Breast epithelium (tissue), 4 donors: ENCODE measurements at regions of chr10 and their contacts with region 1.

Region 1: GRCh38 chr10:7913126-7913872 is 95.0 kb downstream of the TAF3 start:
- DNase-seq: no peak
- H3K4me3 ChIP-seq: no peak overlapping the region
- H3K27ac ChIP-seq: no peak overlapping the region
- H3K4me1 ChIP-seq: no peaks in the 10 kb centered on the region
- H3K27me3 ChIP-seq: no peaks in the 10 kb centered on the region
- CTCF ChIP-seq: no peak
- POLR2A ChIP-seq: no peak

Region 2: DNA sequence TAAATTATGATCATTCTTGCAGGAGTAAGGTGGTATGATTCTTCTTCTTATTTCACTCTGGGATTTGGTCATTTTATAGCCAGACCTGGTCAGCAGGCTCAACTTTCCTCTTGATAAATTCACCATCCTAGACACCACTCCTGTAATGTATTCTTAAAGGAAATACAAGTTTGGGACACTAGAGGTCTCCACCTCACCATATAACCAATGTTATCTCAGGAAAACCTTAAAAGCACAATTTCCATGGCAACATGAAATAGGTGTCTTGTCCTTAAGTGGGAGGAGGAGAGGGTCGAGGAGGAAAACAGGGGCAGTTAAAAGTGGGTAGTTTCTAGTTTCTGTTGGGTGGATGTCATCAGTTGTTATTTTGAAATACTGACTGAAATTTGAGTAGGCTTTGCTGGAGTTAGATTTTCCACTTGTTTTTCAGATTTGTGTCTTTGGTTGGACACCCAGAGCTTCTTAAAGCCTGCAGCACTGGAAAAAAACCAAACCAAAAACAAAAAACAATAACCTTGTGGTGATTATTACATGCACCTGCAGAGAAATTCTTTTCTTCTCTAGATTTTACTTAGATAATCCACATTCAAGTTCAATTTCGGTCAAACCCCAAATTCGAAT is 1496.3 kb before region 1 on chr10:
- intact Hi-C with region 1: no loop called
- DNase-seq: no peak
- H3K4me3 ChIP-seq: no peak overlapping the region
- H3K27ac ChIP-seq: no peak overlapping the region
- H3K4me1 ChIP-seq: no peaks in the 10 kb centered on the region
- H3K27me3 ChIP-seq: no peaks in the 10 kb centered on the region
- CTCF ChIP-seq: peak in 2 of 3 donors; percentile 44 to 65
- POLR2A ChIP-seq: no peak

Region 3: GRCh38 chr10:7857262-7857661 is 56.0 kb before region 1 on chr10:
- intact Hi-C with region 1: loop called (anchors 2 kb)
- DNase-seq: no peak
- H3K4me3 ChIP-seq: no peak overlapping the region
- H3K27ac ChIP-seq: no peak overlapping the region
- H3K4me1 ChIP-seq: no peaks in the 10 kb centered on the region
- H3K27me3 ChIP-seq: no peaks in the 10 kb centered on the region
- CTCF ChIP-seq: no peak
- POLR2A ChIP-seq: no peak

Region 4: DNA sequence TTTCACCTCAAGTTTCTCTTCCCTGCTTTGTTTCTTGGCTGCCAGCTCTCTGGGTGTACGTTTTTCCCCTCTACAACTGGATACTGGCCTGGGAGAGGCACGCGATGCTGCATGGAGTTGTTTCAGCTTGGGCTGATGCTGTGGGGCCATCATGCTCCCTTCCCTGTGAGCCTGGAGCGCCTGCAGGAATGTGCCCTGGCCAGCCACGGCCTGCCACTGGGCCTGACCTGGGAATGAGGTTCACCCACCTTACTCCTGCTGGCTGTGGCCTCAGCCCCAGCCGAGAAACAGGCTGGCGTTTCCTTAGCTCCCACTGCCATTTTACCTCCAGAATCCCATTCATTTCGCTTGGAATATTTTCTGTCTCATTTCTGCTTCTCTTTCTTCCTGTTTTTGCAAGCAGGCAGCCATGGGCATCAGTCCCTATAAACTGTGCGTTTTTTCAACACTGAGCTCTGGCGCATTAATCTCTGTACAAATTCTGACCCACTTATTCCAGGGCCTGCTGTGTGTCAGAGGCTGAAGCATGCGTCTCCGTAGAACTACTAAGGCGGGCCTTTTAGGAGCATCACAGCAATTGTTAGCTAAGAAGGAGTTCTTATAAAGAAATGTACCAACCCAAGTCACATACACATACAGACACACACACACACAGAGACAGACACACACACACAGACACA is 199.1 kb after region 1 on chr10:
- intact Hi-C with region 1: no loop called
- DNase-seq: no peak
- H3K4me3 ChIP-seq: no peak overlapping the region
- H3K27ac ChIP-seq: no peak overlapping the region
- H3K4me1 ChIP-seq: no peaks in the 10 kb centered on the region
- H3K27me3 ChIP-seq: no peaks in the 10 kb centered on the region
- CTCF ChIP-seq: no peak
- POLR2A ChIP-seq: no peak